ENCODE measurements at regions of chr11 and their contacts with region 1.

Region 1: GRCh38 chr11:118878163-118878563 is 5.5 kb upstream of the CXCR5 start:
- DNase-seq: peak in 3 of 9 experiments; percentile 50 to 69 (median 52)
- ATAC-seq: peak; percentile 15
- H3K4me3 ChIP-seq: no peak overlapping the region
- H3K4me3 Mint-ChIP-seq: peak overlapping the region; percentile 45
- H3K27ac ChIP-seq: peak overlapping the region; percentile 64 to 81
- H3K27ac Mint-ChIP-seq: peak overlapping the region; percentile 97
- H3K4me1 ChIP-seq: peaks cover 74% of the 10 kb centered on the region
- H3K4me1 Mint-ChIP-seq: peaks cover 89% of the 10 kb centered on the region
- H3K27me3 ChIP-seq: no peaks in the 10 kb centered on the region
- H3K27me3 Mint-ChIP-seq: no peaks in the 10 kb centered on the region
- CTCF ChIP-seq: no peak

Region 2: DNA sequence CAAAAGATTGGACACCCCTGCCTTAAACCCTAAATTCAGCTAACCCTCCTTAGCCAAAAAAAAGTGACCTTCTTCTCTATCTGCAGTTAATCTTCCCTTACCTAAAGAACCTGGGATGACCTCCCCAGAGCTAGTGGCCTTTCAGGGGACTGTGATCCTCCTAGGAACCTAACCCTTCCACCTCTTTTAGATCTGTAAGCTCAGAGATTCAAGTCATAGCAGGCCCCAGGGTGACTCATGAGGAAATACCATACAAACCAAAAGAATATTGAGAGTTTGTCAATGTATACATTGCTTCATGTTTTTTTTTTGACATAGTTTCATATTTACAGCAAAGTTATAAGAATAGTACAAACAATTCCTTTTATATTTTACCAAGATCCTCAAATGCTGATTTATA is 32.8 kb before region 1 on chr11:
- CTCF ChIA-PET with region 1: no interaction called
- POLR2A ChIA-PET with region 1: no interaction called
- intact Hi-C with region 1: loop called in 1 of 2 experiments (anchors 5 kb)
- DNase-seq: no peak
- ATAC-seq: no peak
- H3K4me3 ChIP-seq: no peak overlapping the region
- H3K4me3 Mint-ChIP-seq: no peak overlapping the region
- H3K27ac ChIP-seq: no peak overlapping the region
- H3K27ac Mint-ChIP-seq: no peak overlapping the region
- H3K4me1 ChIP-seq: no peaks in the 10 kb centered on the region
- H3K4me1 Mint-ChIP-seq: peaks cover 25% of the 10 kb centered on the region
- H3K27me3 ChIP-seq: no peaks in the 10 kb centered on the region
- H3K27me3 Mint-ChIP-seq: no peaks in the 10 kb centered on the region
- CTCF ChIP-seq: no peak

Region 3: DNA sequence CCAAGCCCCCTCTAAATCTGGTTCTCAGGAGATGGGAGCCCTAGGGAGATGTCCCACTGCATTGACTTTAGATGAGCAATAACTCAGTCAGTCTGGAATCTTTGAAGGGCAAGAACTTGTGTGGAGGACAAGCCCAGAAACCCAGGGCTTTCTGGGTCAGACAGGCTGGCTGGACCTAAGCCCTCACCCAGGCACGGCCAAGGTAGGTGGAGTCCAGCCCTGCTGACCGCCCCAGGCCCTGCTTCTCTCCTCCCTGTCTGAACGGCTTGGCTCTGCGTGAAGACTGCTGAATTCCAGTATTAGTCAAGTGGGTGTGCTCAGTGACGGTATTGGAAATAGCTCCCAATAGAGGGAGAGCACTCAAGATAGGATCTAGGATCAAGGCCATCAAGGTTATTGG is 11.6 kb after region 1 on chr11:
- CTCF ChIA-PET with region 1: interaction called, 34 read pairs
- POLR2A ChIA-PET with region 1: interaction called, 11 read pairs
- intact Hi-C with region 1: loop called (anchors 1 kb)
- DNase-seq: no peak
- ATAC-seq: no peak
- H3K4me3 ChIP-seq: no peak overlapping the region
- H3K4me3 Mint-ChIP-seq: peak overlapping the region; percentile 18
- H3K27ac ChIP-seq: no peak overlapping the region
- H3K27ac Mint-ChIP-seq: peak overlapping the region; percentile 85
- H3K4me1 ChIP-seq: peaks cover 77% of the 10 kb centered on the region
- H3K4me1 Mint-ChIP-seq: peaks cover 83% of the 10 kb centered on the region
- H3K27me3 ChIP-seq: no peaks in the 10 kb centered on the region
- H3K27me3 Mint-ChIP-seq: no peaks in the 10 kb centered on the region
- CTCF ChIP-seq: no peak

Region 4: GRCh38 chr11:118907051-118908042 is 29.2 kb after region 1 on chr11:
- CTCF ChIA-PET with region 1: interaction called, 6 read pairs
- POLR2A ChIA-PET with region 1: interaction called, 13 read pairs
- intact Hi-C with region 1: loop called (anchors 5 kb)
- DNase-seq: peak; percentile 79 to 94 (median 87)
- ATAC-seq: peak; percentile 41
- H3K4me3 ChIP-seq: no peak overlapping the region
- H3K4me3 Mint-ChIP-seq: peak overlapping the region; percentile 53
- H3K27ac ChIP-seq: peak overlapping the region; percentile 2 to 61
- H3K27ac Mint-ChIP-seq: peak overlapping the region; percentile 92
- H3K4me1 ChIP-seq: peaks cover 58% of the 10 kb centered on the region
- H3K4me1 Mint-ChIP-seq: peaks cover 58% of the 10 kb centered on the region
- H3K27me3 ChIP-seq: no peaks in the 10 kb centered on the region
- H3K27me3 Mint-ChIP-seq: no peaks in the 10 kb centered on the region
- CTCF ChIP-seq: peak; percentile 91

Measured in CD8-positive, alpha-beta T cell (primary cell).